PC-3 (cell line): ENCODE measurements at regions of chr1 and their contacts with region 1.

Region 1: DNA sequence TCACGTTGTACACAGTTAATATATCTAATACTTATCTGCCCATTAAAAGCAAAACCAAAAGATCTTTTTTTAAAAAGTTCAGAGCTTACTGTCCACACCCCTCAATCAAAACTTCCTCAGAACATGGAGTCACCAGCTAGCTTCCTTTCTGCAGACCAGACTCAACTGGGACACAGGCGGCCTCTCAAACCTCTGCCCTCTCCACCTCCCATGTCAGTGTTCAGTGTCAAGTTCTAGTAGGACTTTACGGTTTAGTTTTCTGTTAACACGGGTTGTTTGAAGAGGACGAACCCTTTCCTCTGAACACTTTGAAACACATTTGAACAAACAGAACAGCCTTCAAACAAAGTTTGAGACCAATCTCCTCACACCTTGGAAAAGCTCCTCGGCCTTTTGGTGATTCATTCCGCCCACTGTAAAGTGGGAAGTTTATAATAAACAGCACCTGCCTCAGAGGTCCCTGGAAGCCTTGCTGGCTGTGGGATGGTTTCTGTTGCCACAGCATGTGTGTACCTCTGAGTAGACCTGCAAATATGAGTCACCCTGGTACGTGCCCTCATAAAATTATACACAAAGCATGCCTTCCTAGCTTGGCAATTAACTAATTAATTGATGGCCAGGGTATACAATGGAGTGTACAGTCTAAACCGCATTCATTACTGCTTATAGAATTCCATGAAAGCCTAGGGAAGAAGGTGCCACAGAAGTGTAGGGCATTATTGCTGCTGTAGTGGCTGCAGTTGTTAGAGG is 48.4 kb upstream of the SIPA1L2 start:
- DNase-seq: peak; percentile 93
- ATAC-seq: peak; percentile 99
- H3K4me3 ChIP-seq: peak overlapping the region; percentile 25; the same call in 1 of the 2 replicates
- H3K27ac ChIP-seq: peak overlapping the region; percentile 64
- H3K4me1 ChIP-seq: peaks cover 15% of the 10 kb centered on the region
- H3K27me3 ChIP-seq: no peaks in the 10 kb centered on the region
- CTCF ChIP-seq: no peak

Region 2: GRCh38 chr1:232664844-232665777 is 13.2 kb before region 1 on chr1:
- CTCF ChIA-PET with region 1: no interaction called
- POLR2A ChIA-PET with region 1: no interaction called
- intact Hi-C with region 1: loop called (anchors 1 kb)
- DNase-seq: peak; percentile 68
- ATAC-seq: peak; percentile 81
- H3K4me3 ChIP-seq: 0 out of 2 replicates have a peak overlapping the region, but pooled peaks have one; percentile 3
- H3K27ac ChIP-seq: peak overlapping the region; percentile 72
- H3K4me1 ChIP-seq: peaks cover 21% of the 10 kb centered on the region
- H3K27me3 ChIP-seq: no peaks in the 10 kb centered on the region
- CTCF ChIP-seq: no peak

Region 3: GRCh38 chr1:232704694-232705680 is 26.6 kb after region 1 on chr1:
- CTCF ChIA-PET with region 1: no interaction called
- POLR2A ChIA-PET with region 1: no interaction called
- intact Hi-C with region 1: loop called (anchors 1 kb)
- DNase-seq: peak; percentile 94
- ATAC-seq: peak; percentile 90
- H3K4me3 ChIP-seq: no peak overlapping the region
- H3K27ac ChIP-seq: peak overlapping the region; percentile 42
- H3K4me1 ChIP-seq: peaks cover 31% of the 10 kb centered on the region
- H3K27me3 ChIP-seq: no peaks in the 10 kb centered on the region
- CTCF ChIP-seq: no peak

Region 4: DNA sequence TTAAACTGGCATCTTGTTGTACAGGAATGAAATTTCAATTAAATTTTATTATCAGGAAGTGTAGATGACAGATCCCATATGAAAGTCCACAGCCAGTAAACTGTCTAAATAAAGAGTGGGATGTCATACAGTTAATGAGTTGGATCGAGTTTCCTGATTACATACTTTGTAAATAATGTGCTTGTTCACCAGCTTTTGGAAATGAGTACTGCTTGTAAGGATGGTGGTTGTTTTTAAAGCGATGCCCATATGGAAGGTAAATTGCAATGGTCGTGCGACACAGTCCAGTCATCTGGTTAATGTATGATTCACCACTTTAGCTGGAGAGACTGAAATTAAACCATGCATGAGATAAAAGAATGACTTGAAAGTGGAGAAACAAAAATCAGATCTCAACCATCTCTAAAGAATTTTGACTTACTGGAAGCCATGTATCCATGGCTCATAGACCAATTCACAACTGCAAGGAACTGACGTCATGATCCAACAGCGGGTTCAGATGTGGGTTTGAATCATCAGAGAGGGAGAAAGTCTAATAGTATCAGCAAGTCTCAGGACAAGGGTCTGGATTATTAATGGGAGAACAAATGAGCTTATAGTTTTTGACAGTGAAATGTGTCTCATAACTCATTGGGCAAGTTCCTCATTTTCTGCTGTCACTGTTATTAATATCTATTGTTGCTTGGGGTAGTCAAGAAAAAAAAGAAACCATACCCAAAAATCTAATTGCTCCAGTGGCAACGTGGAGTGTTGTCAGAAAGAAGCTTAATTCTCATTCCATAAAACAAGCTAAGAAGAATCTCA is 175.8 kb after region 1 on chr1:
- CTCF ChIA-PET with region 1: no interaction called
- POLR2A ChIA-PET with region 1: no interaction called
- intact Hi-C with region 1: loop called (anchors 1 kb)
- DNase-seq: peak; percentile 81
- ATAC-seq: peak; percentile 95
- H3K4me3 ChIP-seq: no peak overlapping the region
- H3K27ac ChIP-seq: peak overlapping the region; percentile 47
- H3K4me1 ChIP-seq: peaks cover 18% of the 10 kb centered on the region; the same call in 1 of the 2 replicates
- H3K27me3 ChIP-seq: no peaks in the 10 kb centered on the region
- CTCF ChIP-seq: no peak

Region 5: DNA sequence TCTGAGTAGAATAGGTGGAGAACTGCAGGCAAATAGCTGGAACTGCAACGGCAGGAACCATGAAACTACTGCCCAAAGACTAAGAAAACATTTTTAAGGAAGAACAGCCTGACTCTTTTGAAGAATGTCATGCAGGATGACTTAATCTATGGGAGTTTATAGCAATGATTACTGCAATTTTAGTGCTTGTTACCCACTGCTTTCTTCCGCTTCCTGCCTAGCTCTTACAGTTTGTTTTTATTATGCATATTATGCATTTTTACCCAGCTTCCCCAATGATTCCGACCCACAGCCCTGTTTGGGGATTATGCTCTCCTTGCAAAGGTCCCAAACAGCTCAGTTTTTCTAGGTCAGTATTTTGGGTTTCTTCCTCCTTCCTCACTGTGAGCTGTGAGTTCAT is 546.0 kb after region 1 on chr1:
- CTCF ChIA-PET with region 1: no interaction called
- POLR2A ChIA-PET with region 1: no interaction called
- intact Hi-C with region 1: no loop called
- DNase-seq: no peak
- ATAC-seq: no peak
- H3K4me3 ChIP-seq: no peak overlapping the region
- H3K27ac ChIP-seq: no peak overlapping the region
- H3K4me1 ChIP-seq: peaks cover 3% of the 10 kb centered on the region; the same call in 1 of the 2 replicates
- H3K27me3 ChIP-seq: no peaks in the 10 kb centered on the region
- CTCF ChIP-seq: no peak